ENCODE measurements at regions of chr19 and their contacts with region 1.

Region 1: DNA sequence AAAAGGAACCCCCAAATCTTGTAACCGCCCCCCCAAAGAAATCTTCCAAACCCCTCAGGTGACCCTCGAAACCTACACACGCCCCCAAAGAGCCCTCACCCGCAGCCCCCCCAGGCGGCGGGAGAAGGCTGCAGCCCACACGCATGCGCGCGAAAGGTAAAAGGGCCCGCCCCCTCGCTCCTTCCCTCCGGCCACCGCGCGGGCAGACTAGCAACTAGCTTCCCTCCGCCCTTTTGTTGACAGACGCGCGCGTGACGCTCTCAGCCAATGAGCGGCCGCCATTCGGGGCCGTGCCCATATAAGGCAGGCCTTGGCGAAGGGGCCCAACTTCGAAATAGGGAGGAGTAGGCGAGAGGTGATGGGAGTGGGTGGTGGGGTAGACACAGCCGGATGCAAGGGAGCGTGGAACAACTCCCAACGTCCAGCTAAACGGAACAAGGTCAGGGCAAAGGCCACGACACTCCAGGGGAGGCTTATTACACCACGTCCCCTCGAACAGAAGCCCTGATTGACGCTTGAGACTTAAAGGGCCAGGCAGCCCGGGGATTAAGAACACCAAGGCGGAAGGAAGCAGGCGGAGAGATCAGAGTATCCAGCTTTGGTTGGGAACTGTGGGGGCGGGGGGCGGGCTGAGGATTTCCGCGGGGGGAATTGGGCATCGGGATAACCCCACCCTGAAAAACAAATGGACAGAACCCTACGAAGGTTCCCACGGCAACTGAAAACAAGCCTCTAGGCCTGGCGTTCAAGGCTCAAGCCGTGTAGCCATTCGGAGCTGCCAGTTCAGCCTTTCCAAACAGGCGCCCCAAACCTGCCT is 13.3 kb downstream of the FBXO46 start:
- DNase-seq: peak; percentile 97
- ATAC-seq: peak; percentile 95
- H3K4me3 ChIP-seq: peak overlapping the region; percentile 54
- H3K27ac ChIP-seq: peak overlapping the region; percentile 93
- H3K4me1 ChIP-seq: peaks cover 9% of the 10 kb centered on the region
- H3K27me3 ChIP-seq: no peaks in the 10 kb centered on the region
- CTCF ChIP-seq: peak; percentile 29; the same call in 1 of the 2 replicates
- POLR2A ChIP-seq: peak; percentile 81
- RAD21 ChIP-seq: no peak

Region 2: DNA sequence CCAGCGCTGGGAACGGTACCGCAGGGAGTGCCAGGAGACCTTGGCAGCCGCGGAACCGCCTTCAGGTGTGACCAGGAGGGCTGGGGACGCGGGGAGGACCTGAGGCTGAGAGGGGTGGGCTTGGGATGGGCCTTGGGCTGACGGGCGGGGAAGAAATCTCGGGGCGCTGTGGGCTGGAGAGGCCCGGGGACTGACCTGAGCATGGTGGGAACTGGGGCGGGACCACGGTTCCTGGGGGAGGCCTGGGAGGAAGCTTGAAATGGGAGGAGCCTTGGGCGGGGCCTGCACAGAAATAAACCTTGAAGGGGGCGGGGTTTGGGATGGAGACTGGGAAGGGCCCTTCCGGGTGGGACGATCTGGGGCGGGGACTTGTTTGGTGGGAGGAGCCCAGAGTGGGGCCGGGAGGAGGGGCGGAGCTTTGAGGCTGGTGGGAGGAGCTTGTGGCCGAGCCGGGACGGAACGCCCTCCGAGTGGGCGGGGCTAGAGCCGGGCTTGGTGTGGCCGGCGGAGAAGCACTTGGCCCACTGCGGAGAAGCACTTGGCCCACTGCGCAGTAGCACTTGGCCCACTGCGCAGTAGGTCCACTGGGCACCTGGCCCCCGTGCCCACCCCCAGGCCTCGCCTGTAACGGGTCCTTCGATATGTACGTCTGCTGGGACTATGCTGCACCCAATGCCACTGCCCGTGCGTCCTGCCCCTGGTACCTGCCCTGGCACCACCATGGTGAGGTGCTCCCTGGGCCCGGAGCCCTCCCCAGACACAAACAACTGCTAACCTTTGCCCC is 46.5 kb before region 1 on chr19:
- CTCF ChIA-PET with region 1: no interaction called
- POLR2A ChIA-PET with region 1: no interaction called
- dilution Hi-C with region 1: no loop called
- in situ Hi-C with region 1: no loop called
- intact Hi-C with region 1: no loop called
- DNase-seq: peak; percentile 72
- ATAC-seq: peak; percentile 87
- H3K4me3 ChIP-seq: no peak overlapping the region
- H3K27ac ChIP-seq: no peak overlapping the region
- H3K4me1 ChIP-seq: peaks cover 5% of the 10 kb centered on the region
- H3K27me3 ChIP-seq: peaks cover 8% of the 10 kb centered on the region; the same call in 1 of the 2 replicates
- CTCF ChIP-seq: no peak
- POLR2A ChIP-seq: no peak
- RAD21 ChIP-seq: no peak

Region 3: GRCh38 chr19:45692187-45693105 is 24.9 kb before region 1 on chr19 and contains the start of gene QPCTL:
- CTCF ChIA-PET with region 1: interaction called, 10 read pairs
- POLR2A ChIA-PET with region 1: interaction called, 4 read pairs
- dilution Hi-C with region 1: no loop called
- in situ Hi-C with region 1: no loop called
- intact Hi-C with region 1: no loop called
- DNase-seq: peak; percentile 100
- ATAC-seq: peak; percentile 94
- H3K4me3 ChIP-seq: peak within 1 kb of the TSS; percentile 89
- H3K27ac ChIP-seq: peak within 1 kb of the TSS; percentile 83
- H3K4me1 ChIP-seq: peaks cover 4% of the 10 kb centered on the region
- H3K27me3 ChIP-seq: no peaks in the 10 kb centered on the region
- CTCF ChIP-seq: no peak
- POLR2A ChIP-seq: peak; percentile 91
- RAD21 ChIP-seq: no peak
- total RNA-seq, gene QPCTL: 6.6 and 7.8 TPM in 2 replicates

Region 4: GRCh38 chr19:45730389-45731288 is 13.3 kb after region 1 on chr19 and contains the start of gene FBXO46:
- CTCF ChIA-PET with region 1: no interaction called
- POLR2A ChIA-PET with region 1: interaction called, 20 read pairs
- dilution Hi-C with region 1: no loop called
- in situ Hi-C with region 1: no loop called
- intact Hi-C with region 1: no loop called
- DNase-seq: peak; percentile 98
- ATAC-seq: peak; percentile 99
- H3K4me3 ChIP-seq: peak within 1 kb of the TSS; percentile 89
- H3K27ac ChIP-seq: peak within 1 kb of the TSS; percentile 50
- H3K4me1 ChIP-seq: peaks cover 3% of the 10 kb centered on the region; the same call in 1 of the 2 replicates
- H3K27me3 ChIP-seq: no peaks in the 10 kb centered on the region
- CTCF ChIP-seq: peak; percentile 35
- POLR2A ChIP-seq: peak; percentile 65; the same call in 1 of the 2 replicates
- RAD21 ChIP-seq: peak; percentile 8; the same call in 1 of the 2 replicates
- total RNA-seq, gene FBXO46: 2.2 and 3.0 TPM in 2 replicates

Measured in IMR-90 (cell line).